ENCODE measurements at regions of chr22 and their contacts with region 1.

Region 1: GRCh38 chr22:30816413-30816812 is 121.7 kb downstream of the OSBP2 start:
- DNase-seq: no peak
- H3K4me3 ChIP-seq: no peak overlapping the region
- H3K27ac ChIP-seq: no peak overlapping the region
- H3K4me1 ChIP-seq: no peaks in the 10 kb centered on the region
- H3K27me3 ChIP-seq: peaks cover 0 to 6% (median 4%) of the 10 kb centered on the region in 4 experiments; a peak in 5 of 7 replicates
- CTCF ChIP-seq: peak; percentile 37 to 42 (median 41)
- EP300 ChIP-seq: no peak
- POLR2A ChIP-seq: no peak
- RAD21 ChIP-seq: peak; percentile 31 to 40; a peak in 3 of 4 replicates

Region 2: DNA sequence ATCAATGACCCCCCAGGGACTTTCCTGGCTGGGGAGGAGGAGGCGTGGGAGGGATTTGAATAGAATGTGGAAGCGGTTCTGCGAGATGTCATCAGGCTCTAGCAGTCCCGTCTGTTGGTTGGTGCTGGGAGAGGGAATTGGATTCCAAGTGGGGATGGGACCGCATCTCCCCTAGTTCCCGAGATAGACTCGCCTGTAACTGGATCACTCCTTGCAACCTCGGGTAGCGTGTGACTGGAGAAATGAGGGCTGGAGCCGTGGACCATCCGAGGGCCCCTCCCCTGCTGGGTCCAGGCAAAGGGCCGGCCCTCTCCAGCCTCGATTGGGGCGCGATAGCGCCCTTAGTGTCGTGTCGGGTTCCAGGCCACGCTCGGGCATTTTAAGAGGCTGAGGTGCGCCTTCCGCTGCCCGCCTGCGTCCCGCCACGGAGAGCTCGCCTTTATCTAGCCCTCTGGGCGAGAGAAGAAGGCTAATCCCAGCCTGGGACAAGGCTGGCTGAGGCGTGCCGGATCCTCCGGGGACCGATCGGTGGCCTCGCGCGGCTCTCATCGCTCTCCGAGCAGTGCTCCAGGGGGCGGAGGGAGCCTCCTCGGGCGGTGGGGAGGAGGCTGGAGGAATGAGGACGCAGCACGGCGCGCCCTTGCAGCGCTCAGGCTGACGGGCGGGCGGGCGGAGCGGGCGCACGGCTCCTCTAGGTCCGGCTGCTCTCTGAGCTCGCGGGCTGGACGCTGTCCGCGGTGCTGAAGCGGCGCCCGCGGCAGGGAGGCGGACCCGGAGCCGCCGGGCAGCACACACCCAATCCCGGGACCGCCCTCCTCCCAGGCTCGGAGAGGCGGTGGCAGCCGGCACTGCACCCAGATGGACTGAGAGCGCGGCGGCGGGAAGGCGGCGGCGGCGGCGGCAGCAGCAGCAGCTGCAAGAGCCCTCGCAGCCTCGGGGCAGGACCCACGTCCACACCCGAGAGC is 13.9 kb before region 1 on chr22:
- CTCF ChIA-PET with region 1: interaction called, 18 read pairs
- POLR2A ChIA-PET with region 1: interaction called, 3 read pairs
- DNase-seq: peak; percentile 80 to 91
- H3K4me3 ChIP-seq: peak overlapping the region; percentile 21 to 57 (median 46); a peak in 7 of 8 replicates
- H3K27ac ChIP-seq: no peak overlapping the region
- H3K4me1 ChIP-seq: peaks cover 4 to 23% (median 13%) of the 10 kb centered on the region in 4 experiments; a peak in 6 of 7 replicates
- H3K27me3 ChIP-seq: peaks cover 2 to 35% (median 24%) of the 10 kb centered on the region in 4 experiments
- CTCF ChIP-seq: peak in 2 of 3 experiments; percentile 17 to 23; a peak in 2 of 4 replicates
- EP300 ChIP-seq: peak in 1 of 2 experiments; percentile 77; a peak in 1 of 3 replicates
- POLR2A ChIP-seq: no peak
- RAD21 ChIP-seq: peak in 1 of 2 experiments; percentile 31; a peak in 1 of 4 replicates

Region 3: GRCh38 chr22:30837531-30837930 is 21.1 kb after region 1 on chr22:
- CTCF ChIA-PET with region 1: no interaction called
- POLR2A ChIA-PET with region 1: no interaction called
- DNase-seq: no peak
- H3K4me3 ChIP-seq: no peak overlapping the region
- H3K27ac ChIP-seq: no peak overlapping the region
- H3K4me1 ChIP-seq: peaks cover 0 to 3% (median 1%) of the 10 kb centered on the region in 4 experiments; a peak in 2 of 7 replicates
- H3K27me3 ChIP-seq: no peaks in the 10 kb centered on the region
- CTCF ChIP-seq: no peak
- EP300 ChIP-seq: no peak
- POLR2A ChIP-seq: no peak
- RAD21 ChIP-seq: no peak

Measured in H1 (cell line).